Aorta (tissue), 5 donors: ENCODE measurements at regions of chr22 and their contacts with region 1.

Region 1: GRCh38 chr22:39152511-39153219 is at the start of gene CBX7:
- DNase-seq: peak; percentile 97 to 99
- ATAC-seq: peak; percentile 95
- H3K4me3 ChIP-seq: peak within 1 kb of the TSS; percentile 94 to 98
- H3K27ac ChIP-seq: peak within 1 kb of the TSS; percentile 37 to 84
- H3K4me1 ChIP-seq: no peaks in the 10 kb centered on the region
- H3K27me3 ChIP-seq: no peaks in the 10 kb centered on the region
- total RNA-seq, gene CBX7: 90.5 to 93.4 TPM

Region 2: DNA sequence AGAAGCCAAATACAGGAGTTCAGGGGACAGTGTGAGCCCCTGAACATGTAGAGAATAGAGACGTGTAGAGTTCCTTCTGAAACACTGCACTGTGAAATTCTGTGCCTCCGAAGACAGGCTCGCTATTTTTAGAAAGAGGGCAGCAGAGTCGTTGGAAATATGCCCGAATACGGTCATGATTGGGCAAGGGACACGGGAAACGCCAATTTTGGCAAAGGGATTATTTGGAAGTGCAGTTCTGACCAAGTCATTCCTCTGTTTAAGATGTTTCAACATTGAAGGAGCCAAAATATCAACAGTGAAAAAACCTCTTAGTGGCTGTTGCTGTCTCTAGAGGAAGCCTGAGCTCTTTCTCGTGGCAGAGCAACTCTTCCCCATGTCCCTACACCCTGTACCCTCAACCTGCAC is 271.2 kb before region 1 on chr22:
- intact Hi-C with region 1: loop called in 1 of 2 experiments (anchors 5 kb)
- DNase-seq: peak in 1 of 2 donors; percentile 75
- ATAC-seq: peak; percentile 85
- H3K4me3 ChIP-seq: no peak overlapping the region
- H3K27ac ChIP-seq: peak overlapping the region; percentile 95 to 97
- H3K4me1 ChIP-seq: peaks cover 4 to 7% of the 10 kb centered on the region in 2 donors
- H3K27me3 ChIP-seq: no peaks in the 10 kb centered on the region

Region 3: DNA sequence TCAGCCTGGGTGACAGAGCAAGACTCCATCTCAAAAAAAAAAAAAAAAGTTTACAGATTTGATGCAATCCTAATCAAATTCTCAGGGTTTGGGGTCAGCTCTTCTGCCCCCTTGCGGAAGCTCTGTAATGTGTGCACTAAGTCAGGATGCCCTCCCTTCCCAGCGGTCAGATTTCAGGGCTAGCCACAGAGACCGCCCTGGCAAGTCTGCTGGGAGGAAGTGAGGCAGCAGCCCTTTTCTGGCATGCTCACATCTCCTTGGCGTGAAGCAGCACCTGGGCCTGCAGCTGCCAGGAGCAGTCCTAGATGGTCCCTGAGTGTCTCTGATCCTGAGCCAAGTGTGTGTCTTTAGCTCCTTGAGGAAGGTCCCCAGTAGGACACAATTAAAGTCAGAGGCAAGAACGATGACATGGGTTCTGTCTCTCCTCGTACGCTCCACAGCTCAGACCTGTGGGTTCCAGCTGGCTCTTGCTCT is 149.5 kb before region 1 on chr22:
- intact Hi-C with region 1: no loop called
- DNase-seq: peak; percentile 87 to 89
- ATAC-seq: peak; percentile 89
- H3K4me3 ChIP-seq: no peak overlapping the region
- H3K27ac ChIP-seq: no peak overlapping the region
- H3K4me1 ChIP-seq: no peaks in the 10 kb centered on the region
- H3K27me3 ChIP-seq: no peaks in the 10 kb centered on the region

Region 4: DNA sequence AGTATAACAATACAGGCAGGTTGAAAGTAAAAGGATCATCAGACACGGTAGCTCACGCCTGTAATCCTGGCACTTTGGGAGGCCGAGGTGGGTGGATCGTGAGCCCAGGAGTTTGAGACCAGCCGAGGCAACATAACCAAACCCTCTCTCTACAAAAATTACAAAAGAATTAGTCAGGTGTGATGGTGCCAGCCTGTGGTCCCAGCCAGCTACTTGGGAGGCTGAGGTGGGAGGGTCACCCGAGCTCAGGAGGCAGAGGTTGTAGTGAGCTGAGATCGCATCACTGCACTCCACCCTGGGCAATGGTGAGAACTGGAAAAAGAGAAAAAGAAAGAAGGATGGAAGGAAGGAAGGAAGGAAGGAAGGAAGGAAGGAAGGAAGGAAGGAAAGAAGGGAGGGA is 42.8 kb after region 1 on chr22:
- intact Hi-C with region 1: no loop called
- DNase-seq: peak in 1 of 2 donors; percentile 35
- ATAC-seq: no peak
- H3K4me3 ChIP-seq: no peak overlapping the region
- H3K27ac ChIP-seq: no peak overlapping the region
- H3K4me1 ChIP-seq: no peaks in the 10 kb centered on the region
- H3K27me3 ChIP-seq: peaks cover 0 to 2% of the 10 kb centered on the region in 2 donors

Region 5: GRCh38 chr22:39309881-39310714 is 157.4 kb after region 1 on chr22:
- intact Hi-C with region 1: loop called in 1 of 2 experiments (anchors 5 kb)
- DNase-seq: peak in 1 of 2 donors; percentile 76
- ATAC-seq: no peak
- H3K4me3 ChIP-seq: no peak overlapping the region
- H3K27ac ChIP-seq: peak overlapping the region in 1 of 2 donors; percentile 5
- H3K4me1 ChIP-seq: no peaks in the 10 kb centered on the region
- H3K27me3 ChIP-seq: no peaks in the 10 kb centered on the region

Region 6: GRCh38 chr22:39319270-39320022 is 166.8 kb after region 1 on chr22 and contains the start of gene RPL3:
- intact Hi-C with region 1: loop called (anchors 1 to 5 kb)
- DNase-seq: peak; percentile 97 to 99
- ATAC-seq: peak; percentile 97
- H3K4me3 ChIP-seq: peak within 1 kb of the TSS; percentile 50 to 89
- H3K27ac ChIP-seq: peak within 1 kb of the TSS; percentile 57 to 94
- H3K4me1 ChIP-seq: no peaks in the 10 kb centered on the region
- H3K27me3 ChIP-seq: no peaks in the 10 kb centered on the region
- total RNA-seq, gene RPL3: 1,469 to 1,615 TPM